Right cardiac atrium (tissue), 5 donors: ENCODE measurements at regions of chr3 and their contacts with region 1.

Region 1: GRCh38 chr3:177359593-177360357 is 162.5 kb upstream of the TBL1XR1 start:
- DNase-seq: peak; percentile 94 to 98 (median 98)
- ATAC-seq: peak; percentile 90 to 94
- H3K4me3 ChIP-seq: peak overlapping the region; percentile 26
- H3K27ac ChIP-seq: peak overlapping the region; percentile 91
- H3K4me1 ChIP-seq: peaks cover 17% of the 10 kb centered on the region
- H3K27me3 ChIP-seq: no peaks in the 10 kb centered on the region

Region 2: DNA sequence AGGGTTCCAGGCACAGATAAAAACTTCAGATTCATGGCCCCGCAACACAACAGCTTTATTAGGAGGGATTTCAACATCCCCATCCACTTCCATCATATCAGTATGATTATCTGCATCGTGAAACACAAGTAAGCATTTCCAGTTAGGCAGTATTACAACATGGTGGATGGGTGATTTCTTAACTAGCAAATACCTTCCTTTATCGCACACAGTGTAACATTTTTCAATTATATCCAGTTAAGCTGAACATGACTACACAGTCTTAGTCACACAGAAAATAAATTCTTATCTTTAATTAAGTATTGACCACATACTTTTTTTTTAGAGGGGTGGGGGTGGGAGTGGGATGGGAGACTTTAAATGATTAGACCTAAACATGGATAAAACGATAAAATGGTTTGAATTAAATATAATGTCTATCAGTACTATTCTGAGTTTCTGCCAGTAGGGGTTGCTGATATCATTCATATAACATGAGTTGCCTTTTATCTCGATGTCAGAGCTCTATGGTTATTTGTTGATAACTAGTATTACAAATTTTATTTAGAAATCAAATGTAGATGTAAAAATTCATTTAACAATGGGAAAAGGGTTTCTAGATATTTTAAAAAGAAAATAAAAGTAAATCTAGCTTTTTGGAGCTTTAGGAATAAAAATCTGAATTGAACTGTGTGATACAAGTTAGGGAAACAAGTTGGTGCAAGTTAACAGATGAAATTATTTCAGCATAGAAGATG is 309.1 kb before region 1 on chr3:
- intact Hi-C with region 1: loop called in 3 of 4 experiments (anchors 2 to 10 kb)
- DNase-seq: no peak
- ATAC-seq: peak; percentile 57 to 65
- H3K4me3 ChIP-seq: no peak overlapping the region
- H3K27ac ChIP-seq: no peak overlapping the region
- H3K4me1 ChIP-seq: no peaks in the 10 kb centered on the region
- H3K27me3 ChIP-seq: no peaks in the 10 kb centered on the region

Region 3: DNA sequence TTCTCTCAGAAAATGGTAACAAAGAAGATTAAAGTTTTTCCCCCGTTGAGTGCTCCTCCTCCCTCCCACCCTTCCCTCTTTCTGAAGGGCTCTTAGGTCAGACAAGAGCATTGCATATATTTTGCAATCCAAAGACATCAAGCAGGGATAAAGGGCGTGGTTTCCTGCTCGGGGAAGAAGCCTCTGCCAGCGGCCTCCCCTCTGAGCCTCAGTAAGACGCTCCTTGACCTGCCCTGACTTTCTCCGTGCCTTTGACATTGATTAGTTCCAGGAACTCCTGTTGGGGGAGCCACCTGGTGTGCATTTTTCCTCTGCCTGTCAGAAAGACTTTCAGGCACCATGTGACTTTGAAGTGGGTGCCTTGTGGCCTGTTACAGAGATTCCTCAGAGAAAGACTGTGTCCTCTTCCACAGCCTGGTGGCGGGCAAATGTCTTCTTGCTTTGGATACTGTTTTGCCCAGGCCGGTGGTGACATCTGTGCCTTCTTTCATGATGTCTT is 75.3 kb before region 1 on chr3:
- intact Hi-C with region 1: loop called in 1 of 4 experiments (anchors 10 kb)
- DNase-seq: peak; percentile 46 to 70 (median 53)
- ATAC-seq: peak; percentile 59 to 77
- H3K4me3 ChIP-seq: no peak overlapping the region
- H3K27ac ChIP-seq: no peak overlapping the region
- H3K4me1 ChIP-seq: no peaks in the 10 kb centered on the region
- H3K27me3 ChIP-seq: no peaks in the 10 kb centered on the region

Region 4: GRCh38 chr3:177294221-177294620 is 65.6 kb before region 1 on chr3:
- intact Hi-C with region 1: loop called in 2 of 4 experiments (anchors 10 kb)
- DNase-seq: peak in 2 of 3 donors; percentile 70
- ATAC-seq: peak; percentile 94
- H3K4me3 ChIP-seq: no peak overlapping the region
- H3K27ac ChIP-seq: peak overlapping the region; percentile 82
- H3K4me1 ChIP-seq: no peaks in the 10 kb centered on the region
- H3K27me3 ChIP-seq: no peaks in the 10 kb centered on the region

Region 5: GRCh38 chr3:177468331-177468730 is 108.6 kb after region 1 on chr3:
- intact Hi-C with region 1: loop called in 1 of 4 experiments (anchors 10 kb)
- DNase-seq: peak; percentile 68 to 89 (median 70)
- ATAC-seq: peak; percentile 73 to 84
- H3K4me3 ChIP-seq: no peak overlapping the region
- H3K27ac ChIP-seq: no peak overlapping the region
- H3K4me1 ChIP-seq: peaks cover 7% of the 10 kb centered on the region
- H3K27me3 ChIP-seq: no peaks in the 10 kb centered on the region